ENCODE measurements at regions of chr9 and their contacts with region 1.

Region 1: DNA sequence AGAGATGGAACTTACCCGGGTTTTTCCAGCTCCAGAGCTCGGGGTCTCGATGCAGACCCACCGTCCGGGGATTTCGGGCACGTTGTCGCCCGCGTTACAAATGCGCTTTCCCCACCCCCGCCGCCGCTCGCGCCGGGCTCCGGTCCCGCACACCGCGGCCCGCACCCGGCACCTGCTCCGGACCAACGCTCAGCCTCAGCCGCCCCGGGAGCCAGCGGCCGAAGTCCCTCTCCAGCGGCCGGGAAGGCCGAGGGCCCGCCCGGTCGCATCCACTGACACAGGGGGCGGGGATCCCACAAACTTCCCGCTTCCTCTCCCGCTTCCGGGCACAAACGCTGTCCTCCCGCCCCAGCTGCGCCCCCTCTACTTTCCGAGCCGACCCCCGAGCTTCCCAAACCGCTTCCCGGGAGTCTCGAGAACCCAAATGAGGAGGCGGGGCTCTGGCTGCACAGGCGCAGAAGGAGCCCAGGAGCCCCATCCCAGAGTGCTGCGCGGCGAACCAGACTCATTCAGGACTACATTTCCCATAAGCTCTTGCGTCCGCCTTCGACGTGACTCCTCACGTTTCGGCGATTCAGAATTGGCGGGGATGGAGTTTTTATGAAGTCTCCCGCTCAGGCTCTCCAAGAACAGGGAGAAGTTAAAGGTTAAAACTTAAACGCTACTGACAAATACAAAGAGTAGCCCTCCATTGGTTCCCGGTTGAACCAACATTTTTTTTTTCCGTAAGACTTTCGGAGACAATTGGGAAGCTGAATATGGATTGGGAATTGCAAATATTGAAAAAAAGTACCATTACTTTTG is at the start of gene ZNF782:
- DNase-seq: peak; percentile 91
- CTCF ChIP-seq: no peak

Region 2: DNA sequence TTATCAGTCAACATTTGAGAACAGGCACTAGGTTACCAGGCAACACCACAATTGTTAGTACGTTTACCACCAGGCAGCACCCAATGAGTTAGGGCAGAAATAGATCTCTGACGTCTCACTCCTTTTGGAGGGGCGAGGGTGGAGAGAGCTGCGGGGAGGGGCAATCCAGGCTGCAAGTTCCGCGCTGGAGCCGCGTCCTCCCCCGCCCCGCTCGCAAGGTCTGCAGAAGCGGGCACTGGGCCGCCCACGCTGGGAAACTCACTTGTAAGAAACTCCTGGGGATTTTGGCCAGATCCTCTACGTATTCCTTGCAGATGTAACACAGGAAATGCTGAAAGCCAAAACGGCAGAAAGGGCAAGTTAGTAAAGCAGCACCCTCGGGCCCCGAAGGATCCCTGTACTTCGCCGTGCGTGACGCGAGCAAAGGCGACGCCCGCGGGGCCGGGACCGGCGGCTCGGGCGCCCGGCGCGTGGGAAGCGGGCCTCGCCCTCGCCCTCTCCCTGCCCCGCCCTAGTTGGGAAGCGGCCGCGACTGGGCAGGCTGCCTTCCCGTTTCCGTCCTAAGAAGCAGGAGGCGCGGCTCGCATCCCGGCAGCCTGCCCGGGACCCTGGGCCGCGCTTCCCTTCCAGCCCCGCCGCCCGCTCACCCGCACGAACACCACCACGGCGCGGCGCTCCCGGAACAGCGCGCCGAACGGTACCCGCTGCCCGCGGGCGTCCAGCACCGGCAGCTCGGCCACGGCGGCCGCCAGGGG is 199.7 kb before region 1 on chr9:
- CTCF ChIA-PET with region 1: no interaction called
- POLR2A ChIA-PET with region 1: no interaction called
- DNase-seq: peak; percentile 56
- CTCF ChIP-seq: no peak

Region 3: GRCh38 chr9:96875461-96876364 is 21.4 kb after region 1 on chr9:
- CTCF ChIA-PET with region 1: interaction called, 81 read pairs
- POLR2A ChIA-PET with region 1: no interaction called
- DNase-seq: peak; percentile 72
- CTCF ChIP-seq: peak; percentile 29

Region 4: GRCh38 chr9:97362266-97363160 is 508.2 kb after region 1 on chr9:
- CTCF ChIA-PET with region 1: interaction called, 13 read pairs
- POLR2A ChIA-PET with region 1: no interaction called
- DNase-seq: peak; percentile 51
- CTCF ChIP-seq: no peak

Region 5: GRCh38 chr9:97398999-97399758 is 544.9 kb after region 1 on chr9:
- CTCF ChIA-PET with region 1: interaction called, 63 read pairs
- POLR2A ChIA-PET with region 1: no interaction called
- DNase-seq: peak; percentile 84
- CTCF ChIP-seq: peak; percentile 95

Measured in GM10248 (cell line).